SK-N-SH (cell line): ENCODE measurements at regions of chr4 and their contacts with region 1.

Region 1: DNA sequence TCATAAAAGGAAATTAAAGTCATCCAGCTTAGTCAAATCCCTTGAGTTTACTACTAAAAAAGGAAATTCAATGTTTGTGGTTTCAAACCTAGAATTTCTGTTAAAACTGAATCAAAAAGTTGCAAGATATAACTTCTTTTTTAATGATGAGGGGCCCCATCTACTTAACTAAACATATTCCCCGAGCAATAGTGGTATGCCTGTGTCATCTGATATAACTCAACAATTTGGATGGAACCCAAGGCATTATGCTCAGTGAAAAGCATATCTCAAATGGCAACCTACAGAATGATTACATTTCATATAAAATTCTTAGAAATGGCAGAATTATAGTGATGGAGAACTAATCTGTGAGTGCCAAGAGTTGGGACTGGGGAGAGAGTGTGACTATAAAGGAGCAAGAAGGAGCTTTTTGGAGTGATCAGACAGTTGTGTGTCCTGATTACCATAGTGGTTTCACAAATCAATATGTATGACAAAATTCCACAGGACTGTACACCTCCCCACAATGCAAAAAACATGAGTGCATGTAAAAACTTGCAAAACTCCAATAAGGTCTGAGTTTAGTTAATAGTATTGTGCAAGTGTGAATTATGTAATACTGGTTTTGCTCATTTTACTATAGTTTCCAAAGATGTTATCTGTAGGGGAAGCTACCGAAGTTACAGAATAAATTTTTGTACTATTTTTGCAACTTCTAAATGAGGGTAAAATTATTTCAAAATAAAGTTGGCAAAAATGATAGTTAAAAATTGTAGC is 323.2 kb downstream of the ARHGAP24 start:
- DNase-seq: no peak
- H3K4me3 ChIP-seq: no peak overlapping the region
- H3K27ac ChIP-seq: no peak overlapping the region
- H3K4me1 ChIP-seq: peaks cover 0 to 9% of the 10 kb centered on the region in 2 experiments; a peak in 1 of 4 replicates
- H3K27me3 ChIP-seq: no peaks in the 10 kb centered on the region
- CTCF ChIP-seq: no peak
- EP300 ChIP-seq: no peak
- RAD21 ChIP-seq: no peak

Region 2: GRCh38 chr4:85084380-85085094 is 713.7 kb before region 1 on chr4:
- CTCF ChIA-PET with region 1: interaction called, 16 read pairs
- POLR2A ChIA-PET with region 1: no interaction called
- DNase-seq: peak; percentile 20
- H3K4me3 ChIP-seq: no peak overlapping the region
- H3K27ac ChIP-seq: no peak overlapping the region
- H3K4me1 ChIP-seq: no peaks in the 10 kb centered on the region
- H3K27me3 ChIP-seq: no peaks in the 10 kb centered on the region
- CTCF ChIP-seq: peak; percentile 82
- EP300 ChIP-seq: no peak
- RAD21 ChIP-seq: peak; percentile 78

Region 3: GRCh38 chr4:85772470-85772869 is 25.7 kb before region 1 on chr4:
- CTCF ChIA-PET with region 1: interaction called, 13 read pairs
- POLR2A ChIA-PET with region 1: no interaction called
- DNase-seq: no peak
- H3K4me3 ChIP-seq: no peak overlapping the region
- H3K27ac ChIP-seq: peak overlapping the region in 1 of 2 experiments; percentile 84; a peak in 2 of 4 replicates
- H3K4me1 ChIP-seq: peaks cover 4 to 18% of the 10 kb centered on the region in 2 experiments; a peak in 3 of 4 replicates
- H3K27me3 ChIP-seq: no peaks in the 10 kb centered on the region
- CTCF ChIP-seq: no peak
- EP300 ChIP-seq: peak in 1 of 2 experiments; percentile 28; a peak in 1 of 4 replicates
- RAD21 ChIP-seq: no peak

Region 4: DNA sequence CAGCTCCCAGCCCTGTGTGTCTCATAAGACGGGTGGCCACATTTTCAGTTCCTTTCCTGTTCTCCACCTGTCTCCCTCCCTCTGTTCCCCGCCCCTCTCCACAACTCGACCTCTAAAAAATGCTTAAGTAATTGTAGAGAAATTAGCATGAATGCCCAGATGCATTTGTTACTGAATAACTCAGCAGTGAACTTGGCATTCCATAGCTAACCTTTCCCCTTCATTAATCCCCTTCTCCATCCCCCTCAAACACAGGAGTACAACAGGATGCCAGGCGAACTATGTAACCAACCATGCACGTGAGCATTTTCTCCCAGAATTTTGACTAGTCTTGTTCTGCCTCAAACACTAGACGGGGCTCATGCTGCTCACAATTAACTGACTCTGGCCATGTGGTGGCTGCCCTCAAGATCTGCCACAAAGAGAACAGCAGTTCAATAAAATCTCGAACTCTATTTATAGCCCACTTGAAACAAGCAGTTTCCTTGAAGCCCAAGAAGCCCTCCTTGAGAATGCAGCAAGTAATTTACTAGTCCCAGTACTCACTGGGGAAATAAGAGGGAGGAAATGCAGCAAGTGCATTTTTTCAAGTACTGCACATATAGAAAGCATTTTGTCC is 28.0 kb after region 1 on chr4:
- CTCF ChIA-PET with region 1: interaction called, 28 read pairs
- POLR2A ChIA-PET with region 1: no interaction called
- DNase-seq: peak; percentile 8
- H3K4me3 ChIP-seq: no peak overlapping the region
- H3K27ac ChIP-seq: peak overlapping the region in 1 of 2 experiments; percentile 20; a peak in 1 of 4 replicates
- H3K4me1 ChIP-seq: peaks cover 9 to 19% of the 10 kb centered on the region in 2 experiments; a peak in 3 of 4 replicates
- H3K27me3 ChIP-seq: no peaks in the 10 kb centered on the region
- CTCF ChIP-seq: no peak
- EP300 ChIP-seq: no peak
- RAD21 ChIP-seq: peak; percentile 22; the same call in 1 of the 2 replicates

Region 5: DNA sequence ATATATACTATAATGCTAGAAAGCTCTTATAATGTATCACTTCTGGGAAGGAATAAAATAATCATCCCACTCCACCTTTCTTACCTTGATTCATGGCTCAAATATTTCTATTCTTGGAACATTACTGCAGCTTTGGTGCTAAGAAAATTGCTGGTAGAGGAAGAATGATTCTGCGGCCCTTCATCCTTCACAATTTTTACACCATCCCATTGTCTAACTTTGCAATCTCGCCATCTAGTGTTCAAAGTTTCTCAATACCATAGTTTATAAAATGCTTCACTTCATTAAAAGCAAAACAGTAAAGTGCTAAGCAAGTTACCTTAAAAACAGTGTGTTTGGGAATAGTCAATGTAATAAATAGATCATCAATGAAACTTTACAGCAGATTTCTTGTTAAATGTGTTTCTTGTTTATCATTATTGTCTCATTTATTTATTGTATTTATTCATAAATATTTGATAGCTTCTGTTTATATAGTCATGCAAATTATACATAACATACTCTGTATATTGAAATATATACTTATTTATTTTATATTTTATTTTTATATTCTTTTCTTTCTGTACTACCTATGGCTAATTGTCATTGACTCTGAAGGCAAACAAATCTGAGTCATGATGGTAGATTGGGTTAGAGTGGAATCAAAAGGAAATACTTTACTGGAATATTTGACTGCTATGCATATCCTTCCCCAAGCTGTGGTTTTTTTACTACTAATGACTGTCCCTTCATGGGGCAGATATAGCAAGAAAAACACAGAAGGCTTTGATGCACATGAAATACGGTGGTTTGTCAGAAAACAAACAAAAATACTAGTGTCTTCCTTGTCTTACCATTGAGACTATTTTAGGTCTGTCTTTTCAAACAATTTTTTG is 171.0 kb after region 1 on chr4:
- CTCF ChIA-PET with region 1: interaction called, 117 read pairs
- POLR2A ChIA-PET with region 1: no interaction called
- DNase-seq: peak; percentile 31
- H3K4me3 ChIP-seq: no peak overlapping the region; a peak in 1 of 4 replicates
- H3K27ac ChIP-seq: peak overlapping the region in 1 of 2 experiments; percentile 29; a peak in 2 of 4 replicates
- H3K4me1 ChIP-seq: peaks cover 0 to 3% of the 10 kb centered on the region in 2 experiments; a peak in 1 of 4 replicates
- H3K27me3 ChIP-seq: no peaks in the 10 kb centered on the region
- CTCF ChIP-seq: peak; percentile 73
- EP300 ChIP-seq: no peak
- RAD21 ChIP-seq: peak; percentile 80

Region 6: GRCh38 chr4:86032476-86033022 is 234.4 kb after region 1 on chr4:
- CTCF ChIA-PET with region 1: interaction called, 159 read pairs
- POLR2A ChIA-PET with region 1: no interaction called
- DNase-seq: peak; percentile 45
- H3K4me3 ChIP-seq: no peak overlapping the region
- H3K27ac ChIP-seq: peak overlapping the region; percentile 22 to 79
- H3K4me1 ChIP-seq: peaks cover 10 to 19% of the 10 kb centered on the region in 2 experiments; a peak in 3 of 4 replicates
- H3K27me3 ChIP-seq: no peaks in the 10 kb centered on the region
- CTCF ChIP-seq: no peak
- EP300 ChIP-seq: peak in 1 of 2 experiments; percentile 87; a peak in 2 of 4 replicates
- RAD21 ChIP-seq: no peak; the same call in 1 of the 2 replicates

Region 7: GRCh38 chr4:86759298-86759697 is 961.1 kb after region 1 on chr4:
- CTCF ChIA-PET with region 1: no interaction called
- POLR2A ChIA-PET with region 1: no interaction called
- DNase-seq: no peak
- H3K4me3 ChIP-seq: no peak overlapping the region
- H3K27ac ChIP-seq: no peak overlapping the region
- H3K4me1 ChIP-seq: no peaks in the 10 kb centered on the region
- H3K27me3 ChIP-seq: no peaks in the 10 kb centered on the region
- CTCF ChIP-seq: no peak
- EP300 ChIP-seq: no peak
- RAD21 ChIP-seq: no peak